ENCODE measurements at regions of chr6 and their contacts with region 1.

Region 1: DNA sequence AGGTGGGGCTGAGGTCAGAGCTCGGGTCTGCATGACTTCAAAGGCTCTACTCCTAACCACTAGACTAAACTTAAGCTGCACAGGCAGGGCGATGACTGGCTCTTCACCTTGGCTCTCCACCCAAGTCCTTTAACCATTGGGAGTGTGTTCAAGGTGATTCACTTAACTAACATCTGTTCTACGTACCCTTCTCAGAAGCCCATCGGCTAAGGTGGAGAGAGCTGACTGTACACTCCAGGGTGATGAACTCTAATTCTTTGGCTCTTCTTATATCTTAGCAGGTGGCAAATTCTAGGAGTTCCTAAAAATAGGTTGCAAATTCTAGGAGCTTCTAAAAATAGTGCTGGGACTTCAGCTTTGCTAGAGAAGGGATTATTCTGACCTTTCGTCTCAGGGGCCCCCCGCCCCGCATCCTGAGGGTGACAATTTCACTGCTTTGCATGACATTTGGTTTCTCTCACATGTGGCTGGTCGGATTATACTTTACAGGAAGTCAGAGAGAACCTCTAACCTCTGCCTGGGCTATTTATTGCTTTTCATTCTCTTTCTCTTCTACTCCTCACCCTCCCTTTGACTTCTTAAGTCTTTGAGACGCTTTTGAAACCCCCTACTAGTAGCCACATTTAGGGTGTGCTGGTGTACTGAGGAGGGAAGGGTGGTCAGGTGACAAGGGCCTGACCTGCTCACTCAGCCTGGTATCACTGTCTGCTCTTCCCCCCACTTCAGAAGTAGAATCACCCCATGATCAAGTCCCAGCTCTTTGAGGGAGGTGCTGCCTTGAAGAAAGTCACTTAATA is 55.5 kb downstream of the PRDM1 start:
- DNase-seq: peak; percentile 85
- H3K4me3 Mint-ChIP-seq: peak overlapping the region; percentile 76
- H3K27ac Mint-ChIP-seq: peak overlapping the region; percentile 96
- H3K4me1 Mint-ChIP-seq: peaks cover 51% of the 10 kb centered on the region
- H3K27me3 Mint-ChIP-seq: no peaks in the 10 kb centered on the region

Region 2: GRCh38 chr6:106072501-106073090 is 69.0 kb before region 1 on chr6:
- intact Hi-C with region 1: no loop called
- DNase-seq: no peak
- H3K4me3 Mint-ChIP-seq: no peak overlapping the region
- H3K27ac Mint-ChIP-seq: no peak overlapping the region
- H3K4me1 Mint-ChIP-seq: peaks cover 2% of the 10 kb centered on the region
- H3K27me3 Mint-ChIP-seq: peaks cover 20% of the 10 kb centered on the region

Region 3: DNA sequence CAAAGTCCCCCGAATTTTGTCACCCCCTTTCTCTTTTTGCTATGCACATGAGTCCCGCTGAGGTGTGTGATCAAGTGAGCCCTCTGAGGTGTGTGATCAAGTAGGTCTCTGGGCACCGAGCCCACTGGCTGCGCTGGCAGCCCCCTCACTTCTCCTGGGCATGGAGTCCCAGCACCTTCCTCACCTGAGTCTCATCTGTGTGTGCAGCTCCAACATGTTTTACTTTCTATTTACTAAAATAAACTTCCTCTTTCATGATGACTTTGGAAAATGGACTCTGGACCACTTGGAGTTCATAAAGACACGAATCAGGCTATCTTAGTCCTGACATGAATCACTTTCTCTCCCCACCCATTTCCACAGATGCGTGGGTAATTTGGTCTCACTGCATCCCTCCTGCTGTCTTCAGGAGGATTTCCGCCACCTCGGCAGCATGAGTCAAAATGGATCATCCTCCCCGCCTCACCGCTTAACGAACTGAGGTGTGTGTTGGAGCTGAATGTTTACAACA is 15.7 kb before region 1 on chr6:
- intact Hi-C with region 1: no loop called
- DNase-seq: peak; percentile 76
- H3K4me3 Mint-ChIP-seq: peak overlapping the region; percentile 55
- H3K27ac Mint-ChIP-seq: peak overlapping the region; percentile 89
- H3K4me1 Mint-ChIP-seq: peaks cover 42% of the 10 kb centered on the region
- H3K27me3 Mint-ChIP-seq: peaks cover 2% of the 10 kb centered on the region

Region 4: DNA sequence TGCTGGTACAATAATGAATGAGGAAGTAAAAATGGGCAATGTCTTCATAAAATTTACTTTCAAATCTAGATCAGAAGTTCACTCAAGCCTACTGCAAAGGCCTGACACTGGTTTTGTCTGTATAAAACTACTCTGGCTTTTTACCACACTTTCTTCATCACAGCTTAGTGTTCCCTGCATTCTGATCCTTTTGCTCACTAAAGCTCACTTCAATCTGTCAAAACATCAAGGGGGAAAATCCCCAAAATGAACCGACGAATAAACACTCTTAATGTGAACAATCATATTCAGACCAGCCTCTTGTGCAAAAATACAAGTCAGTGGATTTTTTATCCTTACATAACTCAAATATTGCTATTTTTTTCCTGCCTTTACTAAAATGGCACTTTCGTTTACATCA is 43.0 kb after region 1 on chr6:
- intact Hi-C with region 1: loop called (anchors 2 kb)
- DNase-seq: peak; percentile 49
- H3K4me3 Mint-ChIP-seq: no peak overlapping the region
- H3K27ac Mint-ChIP-seq: no peak overlapping the region
- H3K4me1 Mint-ChIP-seq: peaks cover 47% of the 10 kb centered on the region
- H3K27me3 Mint-ChIP-seq: no peaks in the 10 kb centered on the region

Region 5: DNA sequence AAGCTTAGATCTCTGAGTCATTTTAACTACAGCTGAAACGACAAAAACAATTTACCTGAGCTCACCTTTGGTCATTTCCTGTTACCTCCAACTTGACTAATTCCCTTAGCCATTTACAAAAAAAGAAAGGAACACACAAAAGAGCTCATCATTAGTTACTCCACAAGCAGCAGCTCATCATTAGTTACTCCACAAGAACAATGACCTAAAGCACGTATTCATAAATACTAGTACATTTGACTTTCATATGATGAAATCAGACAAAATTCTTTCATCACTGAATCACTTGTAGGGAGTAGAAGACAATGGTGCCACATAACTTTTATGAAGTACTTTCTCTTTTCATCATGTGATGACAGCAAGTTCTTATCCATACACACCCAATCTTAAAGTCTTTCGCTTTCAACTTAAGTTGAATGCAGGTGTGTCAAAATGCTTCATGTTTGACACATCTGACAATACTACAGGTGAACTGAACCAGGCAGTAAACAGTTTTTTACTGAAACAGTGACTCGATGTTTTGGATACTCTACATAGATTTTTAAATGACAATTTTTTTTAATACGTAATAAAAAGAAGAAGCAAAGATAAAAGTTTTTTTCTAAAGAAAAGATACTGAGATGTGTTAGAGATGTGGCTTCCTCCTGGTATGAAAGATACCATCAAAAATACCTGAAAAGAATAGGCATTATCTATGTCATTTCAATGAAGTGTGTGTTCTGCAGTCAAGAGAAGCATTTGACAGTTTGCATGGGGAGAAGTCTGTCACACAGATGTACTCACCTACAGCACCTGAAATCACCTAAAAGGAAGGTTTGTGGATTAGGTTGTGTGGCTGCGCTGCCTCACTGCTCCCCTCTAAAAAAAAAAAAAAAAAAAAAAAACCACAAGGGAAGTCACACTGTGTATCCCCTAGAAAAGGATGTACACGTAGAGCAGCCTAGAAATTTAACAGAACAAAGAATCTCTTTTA is 53.6 kb after region 1 on chr6:
- intact Hi-C with region 1: no loop called
- DNase-seq: peak; percentile 71
- H3K4me3 Mint-ChIP-seq: peak overlapping the region; percentile 69
- H3K27ac Mint-ChIP-seq: peak overlapping the region; percentile 82
- H3K4me1 Mint-ChIP-seq: peaks cover 40% of the 10 kb centered on the region
- H3K27me3 Mint-ChIP-seq: no peaks in the 10 kb centered on the region

Measured in activated CD4-positive, alpha-beta T cell treated with anti-CD3 and anti-CD28 coated beads, Interleukin-2, amount 10 ng/mL, durations not matched to agents 24 days and 14 days (primary cell).